Lower lobe of right lung (tissue), 2 donors: ENCODE measurements at regions of chr12 and their contacts with region 1.

Region 1: GRCh38 chr12:1787714-1788113 is 32.7 kb upstream of the LRTM2 start:
- DNase-seq: no peak
- ATAC-seq: no peak
- H3K4me3 ChIP-seq: no peak overlapping the region
- H3K27ac ChIP-seq: no peak overlapping the region
- H3K4me1 ChIP-seq: peaks cover 9% of the 10 kb centered on the region
- H3K27me3 ChIP-seq: no peaks in the 10 kb centered on the region
- CTCF ChIP-seq: no peak

Region 2: GRCh38 chr12:1650260-1650977 is 137.3 kb before region 1 on chr12:
- intact Hi-C with region 1: loop called (anchors 5 kb)
- DNase-seq: no peak
- ATAC-seq: no peak
- H3K4me3 ChIP-seq: no peak overlapping the region
- H3K27ac ChIP-seq: peak overlapping the region; percentile 38
- H3K4me1 ChIP-seq: no peaks in the 10 kb centered on the region
- H3K27me3 ChIP-seq: no peaks in the 10 kb centered on the region
- CTCF ChIP-seq: no peak